ENCODE measurements at regions of chr17 and their contacts with region 1.

Region 1: DNA sequence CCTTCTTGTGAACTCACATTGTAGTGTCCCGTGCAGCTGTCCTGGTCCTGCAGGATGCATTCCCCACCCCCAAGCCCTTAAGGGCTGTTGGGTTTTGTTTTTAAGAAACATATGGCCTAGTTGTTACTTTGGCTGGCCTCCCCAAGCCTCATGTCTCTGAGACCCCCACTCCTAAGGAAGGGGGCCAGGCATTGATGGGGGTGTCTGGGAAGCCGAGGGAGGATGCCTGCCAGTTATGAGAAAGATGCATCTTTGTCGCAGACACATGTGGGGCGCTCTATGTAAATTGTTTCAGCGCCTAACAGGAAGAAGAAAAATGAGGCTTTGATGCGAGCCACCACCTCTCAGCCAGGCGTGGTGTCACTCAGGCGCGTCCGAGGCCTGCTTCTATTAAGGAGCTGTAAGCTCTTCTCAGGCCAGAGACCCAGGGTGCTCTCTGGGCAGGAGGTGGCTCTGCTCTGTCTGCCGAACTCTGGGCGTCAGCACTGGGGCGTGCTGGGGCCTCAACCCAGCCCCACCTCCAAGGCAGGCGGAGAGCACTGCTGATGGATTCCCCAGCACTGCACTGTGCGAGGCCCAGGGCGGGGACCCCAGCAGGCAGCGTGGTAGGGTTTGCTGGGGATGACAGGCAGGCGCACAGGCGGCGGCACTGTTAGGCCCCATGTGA is 70.6 kb downstream of the SREBF1 start:
- DNase-seq: peak in 1 of 2 donors; percentile 25
- ATAC-seq: peak; percentile 47 to 82 (median 80)
- H3K4me3 ChIP-seq: no peak overlapping the region
- H3K4me3 Mint-ChIP-seq: peak overlapping the region; percentile 50
- H3K27ac ChIP-seq: peak overlapping the region; percentile 69
- H3K27ac Mint-ChIP-seq: peak overlapping the region; percentile 87 to 95
- H3K4me1 ChIP-seq: peaks cover 59% of the 10 kb centered on the region
- H3K4me1 Mint-ChIP-seq: peaks cover 43 to 53% of the 10 kb centered on the region in 2 donors
- H3K27me3 ChIP-seq: no peaks in the 10 kb centered on the region
- H3K27me3 Mint-ChIP-seq: no peaks in the 10 kb centered on the region
- CTCF ChIP-seq: no peak

Region 2: GRCh38 chr17:17723354-17724261 is 42.6 kb before region 1 on chr17:
- intact Hi-C with region 1: loop called (anchors 5 kb)
- DNase-seq: peak in 1 of 2 donors; percentile 59
- ATAC-seq: peak in 2 of 3 donors; percentile 59 to 66
- H3K4me3 ChIP-seq: peak overlapping the region; percentile 46
- H3K4me3 Mint-ChIP-seq: peak overlapping the region; percentile 97
- H3K27ac ChIP-seq: no peak overlapping the region
- H3K27ac Mint-ChIP-seq: peak overlapping the region; percentile 50 to 85
- H3K4me1 ChIP-seq: peaks cover 38% of the 10 kb centered on the region
- H3K4me1 Mint-ChIP-seq: peaks cover 39 to 48% of the 10 kb centered on the region in 2 donors
- H3K27me3 ChIP-seq: peaks cover 8% of the 10 kb centered on the region
- H3K27me3 Mint-ChIP-seq: peaks cover 21 to 25% of the 10 kb centered on the region in 2 donors
- CTCF ChIP-seq: no peak